MCF 10A (cell line): ENCODE measurements at regions of chr6 and their contacts with region 1.

Region 1: DNA sequence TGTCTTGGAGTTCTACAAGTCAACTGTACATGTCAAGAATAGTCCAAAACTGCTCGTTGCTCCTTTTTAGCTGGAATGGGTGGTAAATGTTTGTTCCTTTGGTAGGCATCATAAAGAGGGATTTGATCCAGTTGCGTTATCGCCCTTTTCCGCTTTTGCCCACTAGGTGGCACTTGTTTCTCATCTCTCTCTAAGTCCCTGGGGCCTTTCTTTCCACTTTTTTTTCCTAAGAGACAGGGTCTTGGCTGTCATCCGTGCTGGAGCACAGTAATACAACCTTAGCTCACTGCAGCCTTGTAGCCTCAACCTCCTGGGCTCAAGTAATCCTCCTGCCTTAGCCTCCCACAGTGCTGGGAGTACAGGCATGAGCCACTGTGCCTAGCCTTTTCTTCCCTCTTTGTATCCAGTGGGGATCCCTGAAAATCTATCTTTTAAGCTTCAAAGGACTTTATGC is 20.7 kb downstream of the GTPBP2 start:
- DNase-seq: peak; percentile 77
- H3K4me3 Mint-ChIP-seq: no peak overlapping the region
- H3K27ac Mint-ChIP-seq: no peak overlapping the region
- H3K4me1 Mint-ChIP-seq: peaks cover 15% of the 10 kb centered on the region
- H3K27me3 Mint-ChIP-seq: no peaks in the 10 kb centered on the region
- CTCF ChIP-seq: peak; percentile 84

Region 2: GRCh38 chr6:43310624-43311023 is 297.7 kb before region 1 on chr6:
- CTCF ChIA-PET with region 1: no interaction called
- POLR2A ChIA-PET with region 1: no interaction called
- intact Hi-C with region 1: no loop called
- DNase-seq: no peak
- H3K4me3 Mint-ChIP-seq: no peak overlapping the region
- H3K27ac Mint-ChIP-seq: no peak overlapping the region
- H3K4me1 Mint-ChIP-seq: no peaks in the 10 kb centered on the region
- H3K27me3 Mint-ChIP-seq: no peaks in the 10 kb centered on the region
- CTCF ChIP-seq: no peak

Region 3: GRCh38 chr6:43355862-43356590 is 252.3 kb before region 1 on chr6:
- CTCF ChIA-PET with region 1: no interaction called
- POLR2A ChIA-PET with region 1: no interaction called
- intact Hi-C with region 1: no loop called
- DNase-seq: no peak
- H3K4me3 Mint-ChIP-seq: no peak overlapping the region
- H3K27ac Mint-ChIP-seq: no peak overlapping the region
- H3K4me1 Mint-ChIP-seq: no peaks in the 10 kb centered on the region
- H3K27me3 Mint-ChIP-seq: no peaks in the 10 kb centered on the region
- CTCF ChIP-seq: no peak

Region 4: DNA sequence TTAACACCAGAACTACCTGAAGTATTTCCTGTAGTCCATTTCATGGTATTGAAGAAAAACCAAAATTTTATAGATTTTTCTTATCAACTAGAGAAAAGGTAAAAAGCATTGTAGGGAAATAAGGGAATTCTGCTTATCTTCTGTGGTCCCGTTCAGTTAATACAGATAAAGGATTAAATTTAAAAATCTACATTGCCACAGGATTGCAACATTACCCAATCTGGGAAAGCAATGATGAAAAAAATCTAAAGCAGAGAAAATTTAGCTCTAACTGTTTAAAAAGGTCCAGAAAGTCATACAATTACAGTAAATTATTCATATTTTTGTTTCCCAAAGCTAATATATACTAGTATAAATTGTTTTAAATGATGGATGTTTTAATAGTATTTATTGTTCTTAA is 14.4 kb before region 1 on chr6:
- CTCF ChIA-PET with region 1: interaction called, 37 read pairs
- POLR2A ChIA-PET with region 1: interaction called, 3 read pairs
- intact Hi-C with region 1: no loop called
- DNase-seq: no peak
- H3K4me3 Mint-ChIP-seq: no peak overlapping the region
- H3K27ac Mint-ChIP-seq: no peak overlapping the region
- H3K4me1 Mint-ChIP-seq: no peaks in the 10 kb centered on the region
- H3K27me3 Mint-ChIP-seq: no peaks in the 10 kb centered on the region
- CTCF ChIP-seq: no peak

Region 5: DNA sequence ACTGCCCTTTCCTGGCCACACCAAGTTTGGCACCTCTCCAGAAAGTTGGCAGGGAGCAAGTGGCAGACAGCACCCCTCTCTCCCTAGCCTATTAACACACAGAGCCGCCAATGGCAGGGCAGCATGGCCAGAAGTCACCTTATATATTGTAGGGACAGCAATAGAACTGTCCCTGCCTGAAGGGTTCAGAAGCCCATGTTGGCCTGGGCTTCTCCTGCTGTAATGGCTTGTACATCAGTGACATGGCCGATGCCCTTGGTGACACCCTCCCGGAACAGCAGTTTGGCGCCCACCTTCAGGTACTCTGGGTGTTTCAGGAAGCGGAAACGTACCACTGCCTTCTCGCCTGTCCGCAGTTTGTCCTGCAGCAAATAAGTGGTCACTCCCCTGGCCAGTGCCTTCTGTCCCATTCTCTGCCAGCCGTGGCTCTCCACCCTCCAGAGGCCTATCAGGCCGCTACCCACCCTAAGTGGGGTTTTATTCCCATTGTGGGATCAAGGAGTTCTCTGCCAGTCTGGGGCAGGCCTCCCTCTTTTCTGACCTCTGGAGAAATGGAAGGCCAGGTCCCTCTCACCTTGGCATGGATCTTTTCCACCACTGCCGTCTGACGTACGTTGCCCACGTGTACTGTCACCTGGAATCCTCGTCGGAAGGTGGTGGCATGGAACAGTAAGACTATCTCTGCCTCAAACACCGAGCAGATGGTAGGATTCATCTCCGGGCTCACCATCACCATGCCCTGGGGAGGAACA is 13.3 kb after region 1 on chr6:
- CTCF ChIA-PET with region 1: interaction called, 12 read pairs
- POLR2A ChIA-PET with region 1: interaction called, 13 read pairs
- intact Hi-C with region 1: no loop called
- DNase-seq: no peak
- H3K4me3 Mint-ChIP-seq: no peak overlapping the region
- H3K27ac Mint-ChIP-seq: peak overlapping the region; percentile 29
- H3K4me1 Mint-ChIP-seq: peaks cover 21% of the 10 kb centered on the region
- H3K27me3 Mint-ChIP-seq: no peaks in the 10 kb centered on the region
- CTCF ChIP-seq: no peak

Region 6: GRCh38 chr6:43798688-43799444 is 190.5 kb after region 1 on chr6:
- CTCF ChIA-PET with region 1: no interaction called
- POLR2A ChIA-PET with region 1: no interaction called
- intact Hi-C with region 1: no loop called
- DNase-seq: peak; percentile 91
- H3K4me3 Mint-ChIP-seq: no peak overlapping the region
- H3K27ac Mint-ChIP-seq: peak overlapping the region; percentile 73
- H3K4me1 Mint-ChIP-seq: peaks cover 33% of the 10 kb centered on the region
- H3K27me3 Mint-ChIP-seq: no peaks in the 10 kb centered on the region
- CTCF ChIP-seq: no peak

Region 7: GRCh38 chr6:43856005-43856765 is 247.8 kb after region 1 on chr6:
- CTCF ChIA-PET with region 1: no interaction called
- POLR2A ChIA-PET with region 1: no interaction called
- intact Hi-C with region 1: no loop called
- DNase-seq: peak; percentile 60
- H3K4me3 Mint-ChIP-seq: no peak overlapping the region
- H3K27ac Mint-ChIP-seq: no peak overlapping the region
- H3K4me1 Mint-ChIP-seq: peaks cover 4% of the 10 kb centered on the region
- H3K27me3 Mint-ChIP-seq: no peaks in the 10 kb centered on the region
- CTCF ChIP-seq: peak; percentile 18